Activated CD4-positive, alpha-beta T cell treated with anti-CD3 and anti-CD28 coated beads for 36 hours (primary cell): ENCODE measurements at regions of chr9 and their contacts with region 1.

Region 1: GRCh38 chr9:130732131-130732530 is 38.6 kb downstream of the EXOSC2 start:
- DNase-seq: no peak
- ATAC-seq: no peak
- H3K4me3 Mint-ChIP-seq: no peak overlapping the region
- H3K27ac Mint-ChIP-seq: no peak overlapping the region
- H3K4me1 Mint-ChIP-seq: peaks cover 23% of the 10 kb centered on the region
- H3K27me3 Mint-ChIP-seq: no peaks in the 10 kb centered on the region

Region 2: GRCh38 chr9:130701056-130702022 is 30.8 kb before region 1 on chr9:
- CTCF ChIA-PET with region 1: interaction called, 11 read pairs
- POLR2A ChIA-PET with region 1: no interaction called
- intact Hi-C with region 1: no loop called
- DNase-seq: peak; percentile 87
- ATAC-seq: peak; percentile 93
- H3K4me3 Mint-ChIP-seq: no peak overlapping the region
- H3K27ac Mint-ChIP-seq: no peak overlapping the region
- H3K4me1 Mint-ChIP-seq: peaks cover 22% of the 10 kb centered on the region
- H3K27me3 Mint-ChIP-seq: no peaks in the 10 kb centered on the region